AG04449 (cell line): ENCODE measurements at regions of chrX and their contacts with region 1.

Region 1: GRCh38 chrX:134388161-134389109 is 71.5 kb upstream of the HPRT1 start:
- DNase-seq: no peak
- H3K4me3 ChIP-seq: no peak overlapping the region
- CTCF ChIP-seq: no peak

Region 2: DNA sequence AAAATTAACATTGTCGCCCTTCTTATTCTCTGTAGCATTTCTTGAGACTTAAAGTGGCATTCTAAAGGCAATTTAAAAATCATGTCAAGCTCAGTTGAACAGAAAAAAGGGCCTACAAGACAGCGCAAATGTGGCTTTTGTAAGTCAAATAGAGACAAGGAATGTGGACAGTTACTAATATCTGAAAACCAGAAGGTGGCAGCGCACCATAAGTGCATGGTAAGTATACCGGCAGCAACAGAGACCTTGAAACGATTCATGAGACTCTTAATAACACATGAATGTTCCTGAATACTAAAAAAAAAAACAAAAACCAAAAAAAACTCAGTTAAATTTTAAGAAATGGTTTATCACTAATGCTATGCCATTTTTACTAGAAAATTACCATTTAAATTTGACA is 10.9 kb before region 1 on chrX:
- CTCF ChIA-PET with region 1: interaction called, 14 read pairs
- POLR2A ChIA-PET with region 1: no interaction called
- DNase-seq: peak; percentile 5
- H3K4me3 ChIP-seq: no peak overlapping the region
- CTCF ChIP-seq: peak; percentile 27

Region 3: DNA sequence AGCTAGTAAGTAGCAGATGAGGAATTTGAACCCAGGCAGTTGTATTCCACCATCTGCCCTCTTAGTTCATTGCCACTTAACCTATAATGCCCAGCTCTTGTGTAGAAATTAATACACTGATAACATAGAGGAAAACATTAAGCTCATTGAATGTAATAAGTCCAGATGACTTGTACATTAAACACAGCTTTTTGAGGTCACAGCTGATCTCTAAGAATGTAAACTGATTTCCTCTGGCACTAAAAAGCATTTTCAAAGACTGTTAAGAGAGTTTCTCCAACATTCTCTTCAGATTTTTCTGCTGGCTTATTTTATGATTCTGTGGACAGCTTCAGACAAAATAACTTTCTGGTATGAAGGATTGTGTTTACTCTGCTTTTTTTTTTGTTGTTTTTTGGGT is 114.3 kb after region 1 on chrX:
- CTCF ChIA-PET with region 1: no interaction called
- POLR2A ChIA-PET with region 1: no interaction called
- DNase-seq: no peak
- H3K4me3 ChIP-seq: no peak overlapping the region
- CTCF ChIP-seq: no peak